Activated B cell treated with CpG ODN at 0.5 μM for 24 hours (primary cell): ENCODE measurements at regions of chr9 and their contacts with region 1.

Region 1: DNA sequence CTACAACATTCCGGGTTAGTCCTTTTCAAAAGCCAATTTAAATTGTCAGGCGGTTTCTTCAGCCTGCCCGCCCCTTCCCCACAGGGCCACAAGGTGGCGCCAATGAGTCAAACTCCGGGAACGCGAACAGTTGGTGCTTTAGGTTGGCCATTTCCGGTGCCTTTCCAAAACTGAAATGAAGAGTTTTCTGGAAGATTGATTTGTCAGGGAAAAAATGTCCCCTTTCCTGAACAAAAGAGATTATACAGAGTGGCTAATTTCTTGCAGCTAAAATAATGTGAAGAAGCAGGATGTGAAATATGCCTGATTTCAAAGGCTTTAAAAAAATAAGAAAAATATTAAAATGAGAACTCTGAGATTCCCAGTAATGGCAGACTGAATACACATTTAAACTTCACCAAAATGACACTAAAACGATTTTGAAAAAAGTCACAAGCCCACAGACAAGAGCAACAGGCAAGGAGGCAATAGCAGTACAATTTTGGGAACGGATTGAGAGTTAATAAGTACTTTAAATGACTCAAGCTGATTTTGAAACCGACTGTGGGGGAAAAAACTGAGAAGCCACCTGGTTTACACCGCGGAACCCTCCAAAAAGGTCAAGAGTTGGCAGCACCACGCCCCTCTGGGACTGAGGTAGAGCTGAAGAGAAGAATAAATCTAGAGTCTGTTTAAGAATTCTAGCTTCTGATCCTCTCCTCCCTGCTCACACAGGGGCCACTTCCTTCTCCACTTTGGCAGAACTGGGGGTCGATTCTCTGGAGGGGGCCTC is 45.7 kb downstream of the SLC46A2 start:
- DNase-seq: peak; percentile 69
- ATAC-seq: peak; percentile 75
- H3K4me3 Mint-ChIP-seq: peak overlapping the region; percentile 39
- H3K27ac Mint-ChIP-seq: no peak overlapping the region
- H3K4me1 Mint-ChIP-seq: peaks cover 11% of the 10 kb centered on the region
- H3K27me3 Mint-ChIP-seq: no peaks in the 10 kb centered on the region
- CTCF ChIP-seq: peak; percentile 99

Region 2: DNA sequence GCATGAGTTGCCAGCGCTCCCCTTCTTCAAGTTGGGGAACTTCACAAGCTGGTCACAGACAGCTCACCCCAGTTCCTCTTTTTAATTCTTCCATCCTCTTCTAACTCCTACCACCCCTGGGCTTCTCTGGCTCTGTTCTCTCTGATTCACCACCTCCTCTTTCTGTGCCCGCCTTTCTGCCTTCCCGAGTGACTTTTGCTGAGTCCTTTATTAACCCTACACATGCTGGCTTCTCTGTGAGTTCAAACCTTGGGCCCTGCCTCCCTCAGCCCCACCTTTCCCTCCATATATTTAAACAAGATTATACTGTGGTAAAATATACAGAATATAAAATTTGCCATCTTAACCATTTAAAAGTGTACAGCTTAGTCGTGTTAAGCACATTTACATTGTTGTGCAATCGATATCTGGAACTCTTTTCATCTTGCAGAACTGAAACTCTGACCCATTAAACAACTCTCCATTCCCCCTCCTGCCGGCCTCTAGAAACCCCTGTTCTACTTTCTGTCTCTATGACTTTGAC is 13.7 kb after region 1 on chr9:
- CTCF ChIA-PET with region 1: interaction called, 6 read pairs
- POLR2A ChIA-PET with region 1: interaction called, 6 read pairs
- intact Hi-C with region 1: loop called (anchors 1 kb)
- DNase-seq: no peak
- ATAC-seq: peak; percentile 90
- H3K4me3 Mint-ChIP-seq: peak overlapping the region; percentile 47
- H3K27ac Mint-ChIP-seq: peak overlapping the region; percentile 77
- H3K4me1 Mint-ChIP-seq: peaks cover 62% of the 10 kb centered on the region
- H3K27me3 Mint-ChIP-seq: no peaks in the 10 kb centered on the region
- CTCF ChIP-seq: no peak

Region 3: DNA sequence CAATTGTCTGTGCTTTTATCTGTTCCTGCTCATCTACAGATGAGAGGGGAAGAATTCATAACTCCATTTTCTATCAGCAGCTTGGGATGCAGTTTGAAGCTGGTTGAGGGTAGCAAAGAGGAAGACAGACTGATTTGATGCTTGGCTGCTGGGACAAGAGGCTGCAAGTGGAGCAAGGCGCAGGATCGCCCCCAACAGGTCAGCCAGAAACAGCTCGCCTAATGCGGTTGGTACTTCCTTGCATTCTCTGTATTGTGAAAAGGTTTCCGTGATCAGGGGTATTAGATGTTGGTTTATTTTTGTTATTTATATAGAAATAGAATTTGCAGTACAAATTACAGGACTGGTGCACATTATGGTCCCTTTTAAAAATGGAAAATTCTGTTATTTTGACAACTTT is 126.5 kb after region 1 on chr9:
- CTCF ChIA-PET with region 1: interaction called, 4 read pairs
- POLR2A ChIA-PET with region 1: no interaction called
- intact Hi-C with region 1: loop called (anchors 1 kb)
- DNase-seq: no peak
- ATAC-seq: no peak
- H3K4me3 Mint-ChIP-seq: no peak overlapping the region
- H3K27ac Mint-ChIP-seq: no peak overlapping the region
- H3K4me1 Mint-ChIP-seq: no peaks in the 10 kb centered on the region
- H3K27me3 Mint-ChIP-seq: peaks cover 25% of the 10 kb centered on the region
- CTCF ChIP-seq: no peak

Region 4: GRCh38 chr9:113148781-113149510 is 304.0 kb after region 1 on chr9:
- CTCF ChIA-PET with region 1: no interaction called
- POLR2A ChIA-PET with region 1: no interaction called
- intact Hi-C with region 1: no loop called
- DNase-seq: no peak
- ATAC-seq: no peak
- H3K4me3 Mint-ChIP-seq: no peak overlapping the region
- H3K27ac Mint-ChIP-seq: no peak overlapping the region
- H3K4me1 Mint-ChIP-seq: peaks cover 8% of the 10 kb centered on the region
- H3K27me3 Mint-ChIP-seq: peaks cover 19% of the 10 kb centered on the region
- CTCF ChIP-seq: no peak

Region 5: DNA sequence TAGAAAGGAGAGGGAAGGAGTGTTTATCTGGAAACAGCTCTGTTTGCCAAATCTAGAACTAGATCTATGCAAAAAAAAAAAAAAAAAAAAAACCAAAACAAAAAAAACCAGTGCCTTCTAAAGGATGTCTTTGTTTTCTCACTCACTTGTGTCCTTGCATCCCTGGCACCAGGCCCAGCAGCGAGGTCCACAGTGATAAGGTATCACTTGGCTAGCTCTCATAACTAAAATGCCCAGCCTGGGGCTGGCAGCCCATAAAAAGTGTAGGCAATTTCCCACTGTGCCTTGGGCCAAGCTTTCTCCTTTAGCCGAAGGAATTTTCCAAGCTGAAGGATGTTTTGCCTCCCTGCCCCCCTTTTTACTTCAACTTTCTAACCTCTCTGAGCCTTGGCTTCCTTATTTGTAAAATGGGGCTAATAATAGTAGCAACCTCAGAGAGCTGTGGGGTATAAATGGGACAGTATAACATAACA is 639.3 kb after region 1 on chr9:
- CTCF ChIA-PET with region 1: no interaction called
- POLR2A ChIA-PET with region 1: no interaction called
- intact Hi-C with region 1: no loop called
- DNase-seq: no peak
- ATAC-seq: no peak
- H3K4me3 Mint-ChIP-seq: no peak overlapping the region
- H3K27ac Mint-ChIP-seq: no peak overlapping the region
- H3K4me1 Mint-ChIP-seq: no peaks in the 10 kb centered on the region
- H3K27me3 Mint-ChIP-seq: no peaks in the 10 kb centered on the region
- CTCF ChIP-seq: no peak